PC-3 (cell line): ENCODE measurements at regions of chr9 and their contacts with region 1.

Region 1: DNA sequence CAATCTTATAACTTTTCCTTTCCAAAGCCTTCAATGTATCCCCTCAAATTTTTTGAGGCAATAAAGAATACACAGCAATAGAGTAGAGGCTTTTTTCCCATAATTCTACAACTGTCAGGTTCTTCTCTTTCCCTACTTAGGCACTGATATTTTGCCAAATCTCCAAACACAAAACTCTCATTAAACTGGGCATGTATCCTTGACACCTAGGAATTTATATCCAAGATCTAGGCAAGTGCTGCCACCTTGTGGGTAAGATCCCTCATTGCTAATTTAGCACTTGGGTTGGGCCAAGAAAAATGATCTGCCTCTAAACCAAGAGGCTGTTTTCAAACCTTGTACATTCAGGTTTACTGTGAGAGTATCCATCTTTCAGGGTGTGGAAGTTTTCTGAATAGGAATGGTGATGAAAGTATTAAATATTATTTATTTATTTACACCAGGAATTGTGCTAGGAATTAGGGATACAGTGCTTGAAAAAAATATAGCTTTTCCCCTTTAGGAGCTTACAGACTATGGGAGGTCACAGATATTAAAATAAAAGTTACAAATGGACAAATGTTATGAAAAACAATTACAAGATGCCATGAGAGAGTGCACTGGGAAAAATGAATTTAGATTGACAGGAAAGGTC is 17.6 kb downstream of the TSTD2 start:
- DNase-seq: peak; percentile 72
- ATAC-seq: 0 out of 2 replicates have a peak, but pooled peaks have one; percentile 38
- H3K4me3 ChIP-seq: no peak overlapping the region
- H3K27ac ChIP-seq: no peak overlapping the region
- H3K4me1 ChIP-seq: no peaks in the 10 kb centered on the region
- H3K27me3 ChIP-seq: no peaks in the 10 kb centered on the region
- CTCF ChIP-seq: peak; percentile 76

Region 2: DNA sequence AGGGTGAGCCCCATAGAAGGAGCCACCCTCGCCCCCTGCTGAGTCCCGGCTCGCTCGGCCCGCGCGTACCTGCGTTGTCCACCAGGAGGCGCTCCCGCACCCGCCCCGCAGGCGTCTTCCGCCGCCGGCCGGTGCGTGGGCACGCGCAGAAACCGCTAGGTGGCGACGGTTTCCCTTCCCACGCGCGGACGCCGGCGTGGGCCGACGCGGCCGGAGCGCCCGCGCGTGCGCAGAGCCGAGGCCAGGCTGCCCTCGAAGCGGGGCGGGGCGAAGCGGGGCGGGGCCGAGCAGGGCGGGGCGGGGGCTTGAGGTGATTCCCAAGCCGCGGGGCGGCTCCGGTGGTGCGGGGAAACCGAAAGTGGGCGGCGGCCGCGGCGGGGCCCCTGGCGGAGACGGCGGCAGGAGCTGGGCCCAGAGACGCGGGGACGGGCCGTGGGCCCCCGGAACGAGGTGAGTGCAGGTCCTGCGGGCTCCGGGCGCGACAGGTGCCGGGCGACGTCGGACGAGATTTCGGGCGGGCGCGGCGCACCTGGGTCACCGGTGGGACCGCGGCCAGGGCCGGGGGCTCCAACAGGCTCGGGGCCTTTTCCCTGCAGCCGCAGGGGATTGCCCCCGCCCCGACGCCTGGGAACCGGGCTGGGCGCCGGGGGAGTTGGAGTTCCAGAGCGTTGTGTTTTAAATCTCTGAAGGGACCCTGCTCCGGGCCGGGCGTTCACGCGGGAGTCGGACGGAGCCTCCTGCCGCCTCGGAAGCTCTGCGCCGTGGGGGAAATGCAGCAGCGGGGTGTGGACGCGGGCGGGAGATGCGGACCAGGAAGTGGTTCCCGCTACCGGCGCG is 203.5 kb before region 1 on chr9 and contains the start of gene TDRD7:
- CTCF ChIA-PET with region 1: no interaction called
- POLR2A ChIA-PET with region 1: no interaction called
- intact Hi-C with region 1: loop called (anchors 5 kb)
- DNase-seq: peak; percentile 82
- ATAC-seq: peak; percentile 80
- H3K4me3 ChIP-seq: peak within 1 kb of the TSS; percentile 76
- H3K27ac ChIP-seq: no peak within 1 kb of the TSS
- H3K4me1 ChIP-seq: no peaks in the 10 kb centered on the region; the same call in 1 of the 2 replicates
- H3K27me3 ChIP-seq: no peaks in the 10 kb centered on the region
- CTCF ChIP-seq: peak; percentile 77
- total RNA-seq, gene TDRD7: 4.2 and 4.3 TPM in 2 replicates

Region 3: DNA sequence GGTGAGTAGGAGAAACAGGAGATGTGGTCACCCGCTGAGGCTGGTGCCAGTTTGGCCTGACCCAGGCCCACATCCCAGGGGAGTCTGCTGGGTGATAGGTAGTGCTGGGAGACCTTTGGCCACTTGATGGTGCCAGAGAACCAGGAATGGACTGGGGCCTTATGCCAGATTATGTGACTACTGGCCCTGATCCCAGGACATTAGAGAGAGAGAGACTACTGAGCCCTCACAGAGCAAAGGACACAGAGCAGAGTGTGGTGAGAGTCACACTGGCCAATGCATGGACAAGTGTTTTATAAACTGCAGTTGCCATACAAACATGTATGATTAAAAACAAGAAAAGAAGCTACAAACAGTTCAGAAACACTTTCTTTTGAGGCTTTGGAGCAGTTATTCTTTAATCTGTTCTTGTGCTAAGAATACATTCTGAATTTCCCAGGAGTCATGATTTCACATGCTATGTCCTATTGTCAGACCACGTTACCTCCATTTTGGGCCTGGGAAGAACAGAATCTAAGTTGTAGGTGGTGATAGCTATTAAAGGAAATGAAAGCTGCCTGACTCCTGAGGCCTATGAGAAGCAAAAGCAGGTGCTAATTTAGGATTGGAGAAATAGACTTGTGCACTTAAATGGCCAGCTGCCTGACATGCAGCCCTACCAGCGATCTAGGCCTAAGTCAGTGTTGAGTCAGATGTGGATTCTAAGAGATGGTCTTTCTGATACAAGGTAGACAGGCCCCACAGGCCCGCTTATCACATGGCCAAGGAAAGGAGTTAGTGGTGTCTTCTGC is 146.7 kb before region 1 on chr9:
- CTCF ChIA-PET with region 1: interaction called, 14 read pairs
- POLR2A ChIA-PET with region 1: no interaction called
- intact Hi-C with region 1: loop called (anchors 1 kb)
- DNase-seq: peak; percentile 60
- ATAC-seq: peak; percentile 78
- H3K4me3 ChIP-seq: no peak overlapping the region
- H3K27ac ChIP-seq: no peak overlapping the region
- H3K4me1 ChIP-seq: no peaks in the 10 kb centered on the region
- H3K27me3 ChIP-seq: no peaks in the 10 kb centered on the region
- CTCF ChIP-seq: peak; percentile 83